ENCODE measurements at regions of chr1 and their contacts with region 1.

Region 1: GRCh38 chr1:117895482-117896114 is 33.8 kb downstream of the GDAP2 start:
- DNase-seq: no peak

Region 2: DNA sequence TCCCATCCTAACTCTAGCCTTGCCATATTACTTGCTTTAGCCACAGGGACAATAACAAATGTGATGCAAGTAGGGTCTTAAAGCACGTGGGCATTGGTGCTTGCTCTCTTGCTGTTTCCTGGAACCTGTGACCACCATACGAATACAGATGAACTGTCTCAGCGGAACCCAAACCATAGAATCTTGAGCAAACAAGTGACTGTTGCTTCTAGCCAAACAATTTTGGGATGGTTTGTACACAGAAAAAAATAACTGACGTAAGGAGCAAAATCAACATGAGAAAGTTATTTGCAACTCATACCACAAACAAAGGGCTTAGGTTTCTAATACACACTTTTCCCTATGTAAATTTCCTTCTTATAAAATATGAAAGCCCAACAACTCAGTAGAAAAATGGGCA is 669.6 kb before region 1 on chr1:
- intact Hi-C with region 1: no loop called
- DNase-seq: no peak

Region 3: GRCh38 chr1:117512743-117513321 is 382.8 kb before region 1 on chr1:
- intact Hi-C with region 1: loop called (anchors 5 kb)
- DNase-seq: no peak

Region 4: DNA sequence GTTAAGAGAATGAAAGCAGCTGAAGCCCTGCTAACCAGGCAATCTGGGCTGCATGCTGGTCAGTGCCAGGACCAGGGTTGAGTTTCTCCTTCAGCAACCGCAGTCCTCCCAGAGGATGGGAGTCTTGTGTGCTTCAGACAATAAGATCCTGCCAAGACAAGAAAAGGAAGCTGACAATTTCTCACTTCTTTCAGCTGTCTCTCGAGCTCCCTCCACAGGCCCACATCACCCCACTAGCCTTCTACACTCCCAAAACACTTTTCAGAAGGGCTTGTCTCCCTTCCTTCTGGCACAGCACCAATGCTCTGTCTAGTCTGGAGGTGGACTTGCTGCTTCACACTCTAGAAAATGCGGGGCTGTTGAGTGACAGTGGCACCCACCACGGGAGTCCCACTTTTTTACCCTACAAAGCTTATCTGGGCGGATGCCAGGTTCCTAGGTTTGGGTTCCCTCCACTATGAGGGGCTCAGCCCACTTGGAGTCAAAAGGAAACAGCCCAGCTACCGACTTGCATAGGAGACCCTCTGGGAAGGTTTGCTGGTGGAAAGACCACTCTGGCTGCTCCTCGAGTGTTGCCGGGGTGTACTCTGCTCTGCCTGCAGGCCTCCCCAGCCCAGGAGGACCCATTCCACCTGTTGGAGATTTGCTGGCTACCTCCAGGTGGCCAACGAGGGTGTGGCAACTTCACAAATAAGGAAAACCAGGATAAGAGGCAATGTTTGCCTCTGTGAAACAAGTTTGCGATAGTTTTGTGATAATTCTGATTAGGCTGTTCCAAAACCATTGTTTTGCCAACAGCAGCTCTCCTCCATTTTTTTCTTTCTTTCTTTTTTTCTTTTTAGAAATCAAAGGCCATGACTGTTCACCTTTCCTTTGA is 220.8 kb before region 1 on chr1:
- intact Hi-C with region 1: no loop called
- DNase-seq: no peak

Measured in cardiac septum (tissue), 1 donor.